AG04450 (cell line): ENCODE measurements at regions of chr6 and their contacts with region 1.

Region 1: DNA sequence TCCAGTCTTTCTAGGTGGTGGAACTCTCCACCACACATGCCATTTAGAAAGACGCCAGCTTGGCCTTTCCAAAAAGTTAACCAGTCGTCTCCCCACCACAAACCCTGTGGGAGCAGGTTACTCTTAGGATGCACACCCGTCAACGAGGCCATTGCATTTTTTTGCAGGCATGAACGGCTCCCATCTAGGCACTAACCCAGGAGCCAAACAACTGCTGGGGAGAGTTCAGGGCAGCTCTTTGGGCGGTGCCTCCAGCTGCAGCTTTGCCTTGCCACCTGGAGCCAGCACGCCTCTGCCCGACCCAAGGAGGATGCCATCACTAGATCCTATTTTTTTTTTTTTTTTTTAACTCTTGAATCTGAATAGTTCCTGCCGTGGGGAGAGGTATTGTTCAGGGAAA is 39.9 kb downstream of the TBC1D7 start:
- DNase-seq: no peak
- H3K4me3 ChIP-seq: no peak overlapping the region
- H3K27ac ChIP-seq: no peak overlapping the region
- H3K27me3 ChIP-seq: no peaks in the 10 kb centered on the region
- CTCF ChIP-seq: no peak

Region 2: DNA sequence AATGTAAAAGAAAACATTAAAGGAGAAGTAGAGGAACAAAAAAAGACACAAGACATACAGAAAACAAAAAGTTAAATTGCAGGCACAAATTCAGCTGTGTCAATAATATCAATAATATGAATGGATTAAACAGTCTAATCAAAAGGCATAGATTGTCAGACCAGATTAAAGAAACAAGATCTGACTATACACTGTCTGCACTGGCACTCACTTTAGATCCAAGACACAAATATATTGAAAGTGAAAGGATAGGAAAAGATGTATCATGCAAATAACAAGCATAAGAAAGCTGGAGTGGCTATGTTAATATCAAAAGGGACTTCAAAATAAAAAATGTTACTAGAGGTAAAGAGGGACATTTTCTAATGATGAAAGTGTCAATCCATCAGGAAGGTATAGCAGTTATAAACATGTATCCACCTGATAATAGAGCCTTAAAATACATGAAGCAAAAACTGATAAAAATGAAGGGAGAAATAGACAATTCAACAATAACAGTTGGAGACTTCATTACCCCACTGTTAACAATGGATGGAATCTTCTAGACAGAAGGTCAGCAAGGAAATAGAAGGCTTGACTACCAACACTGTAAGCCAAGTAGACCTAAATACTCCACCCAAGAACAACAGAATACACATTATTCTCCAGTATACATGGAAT is 1186.7 kb before region 1 on chr6:
- CTCF ChIA-PET with region 1: no interaction called
- POLR2A ChIA-PET with region 1: interaction called, 10 read pairs
- DNase-seq: no peak
- H3K4me3 ChIP-seq: no peak overlapping the region
- H3K27ac ChIP-seq: no peak overlapping the region
- H3K27me3 ChIP-seq: no peaks in the 10 kb centered on the region
- CTCF ChIP-seq: no peak

Region 3: GRCh38 chr6:13248053-13248452 is 40.4 kb before region 1 on chr6:
- CTCF ChIA-PET with region 1: no interaction called
- POLR2A ChIA-PET with region 1: no interaction called
- DNase-seq: peak; percentile 11
- H3K4me3 ChIP-seq: no peak overlapping the region
- H3K27ac ChIP-seq: no peak overlapping the region
- H3K27me3 ChIP-seq: peaks cover 8% of the 10 kb centered on the region
- CTCF ChIP-seq: no peak